Naive thymus-derived CD4-positive, alpha-beta T cell (primary cell): ENCODE measurements at regions of chr21 and their contacts with region 1.

Region 1: DNA sequence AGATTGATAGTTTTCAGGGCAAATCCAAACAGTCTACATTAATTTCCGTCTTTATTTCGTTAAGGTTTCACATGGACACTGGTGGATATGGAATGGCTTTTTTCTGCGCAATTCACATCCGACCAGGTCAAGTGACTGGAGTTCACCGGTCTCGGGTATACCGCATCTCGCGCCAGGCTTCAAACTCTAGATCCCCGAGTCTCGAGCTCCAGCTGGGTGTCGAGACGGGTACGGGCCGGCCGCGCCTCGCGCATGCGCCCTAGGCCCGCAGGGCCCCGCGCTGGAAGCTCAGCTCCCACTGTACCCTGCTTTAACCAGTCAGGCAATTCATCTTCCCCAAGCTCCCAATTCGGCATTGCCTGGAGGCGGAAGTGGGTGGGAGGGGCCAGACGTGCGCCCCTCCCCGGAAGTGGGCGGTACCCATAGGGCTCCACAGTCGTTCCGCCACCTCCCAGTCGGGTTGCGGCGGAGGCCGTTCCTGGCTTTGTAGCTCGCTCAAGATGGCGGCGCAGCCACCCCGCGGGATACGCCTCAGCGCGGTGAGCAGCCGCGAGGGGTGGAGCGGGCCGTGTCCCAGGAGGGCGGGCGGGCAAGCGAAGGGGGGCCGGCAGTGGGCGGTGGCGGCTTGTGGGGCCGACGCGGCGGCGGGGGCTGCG is at the start of gene MORC3:
- DNase-seq: peak; percentile 95 to 98 (median 97)
- ATAC-seq: peak; percentile 96
- H3K4me3 ChIP-seq: peak within 1 kb of the TSS; percentile 78
- H3K4me3 Mint-ChIP-seq: peak within 1 kb of the TSS; percentile 90 to 100 (median 96)
- H3K27ac ChIP-seq: peak within 1 kb of the TSS; percentile 93
- H3K27ac Mint-ChIP-seq: peak within 1 kb of the TSS; percentile 94 to 99 (median 97)
- H3K4me1 ChIP-seq: peaks cover 11 to 22% of the 10 kb centered on the region in 2 donors
- H3K4me1 Mint-ChIP-seq: peaks cover 29 to 40% (median 37%) of the 10 kb centered on the region in 7 donors
- H3K27me3 ChIP-seq: no peaks in the 10 kb centered on the region
- H3K27me3 Mint-ChIP-seq: peaks cover 0 to 5% (median 0%) of the 10 kb centered on the region in 5 donors
- total RNA-seq, gene MORC3: 48.2 to 123 (median 62.0) TPM

Region 2: GRCh38 chr21:36069713-36070573 is 249.9 kb before region 1 on chr21 and contains the start of gene CBR1:
- CTCF ChIA-PET with region 1: no interaction called
- POLR2A ChIA-PET with region 1: interaction called, 6 read pairs
- intact Hi-C with region 1: loop called in 1 of 2 experiments (anchors 2 kb)
- DNase-seq: peak; percentile 62 to 90 (median 84)
- ATAC-seq: peak; percentile 98
- H3K4me3 ChIP-seq: peak within 1 kb of the TSS; percentile 73
- H3K4me3 Mint-ChIP-seq: peak within 1 kb of the TSS; percentile 83 to 93 (median 90)
- H3K27ac ChIP-seq: peak within 1 kb of the TSS; percentile 65
- H3K27ac Mint-ChIP-seq: peak within 1 kb of the TSS; percentile 63 to 93 (median 82)
- H3K4me1 ChIP-seq: peaks cover 5 to 21% of the 10 kb centered on the region in 2 donors
- H3K4me1 Mint-ChIP-seq: peaks cover 12 to 47% (median 41%) of the 10 kb centered on the region in 7 donors
- H3K27me3 ChIP-seq: no peaks in the 10 kb centered on the region
- H3K27me3 Mint-ChIP-seq: no peaks in the 10 kb centered on the region
- total RNA-seq, gene CBR1: 6.0 to 51.1 (median 22.1) TPM

Region 3: DNA sequence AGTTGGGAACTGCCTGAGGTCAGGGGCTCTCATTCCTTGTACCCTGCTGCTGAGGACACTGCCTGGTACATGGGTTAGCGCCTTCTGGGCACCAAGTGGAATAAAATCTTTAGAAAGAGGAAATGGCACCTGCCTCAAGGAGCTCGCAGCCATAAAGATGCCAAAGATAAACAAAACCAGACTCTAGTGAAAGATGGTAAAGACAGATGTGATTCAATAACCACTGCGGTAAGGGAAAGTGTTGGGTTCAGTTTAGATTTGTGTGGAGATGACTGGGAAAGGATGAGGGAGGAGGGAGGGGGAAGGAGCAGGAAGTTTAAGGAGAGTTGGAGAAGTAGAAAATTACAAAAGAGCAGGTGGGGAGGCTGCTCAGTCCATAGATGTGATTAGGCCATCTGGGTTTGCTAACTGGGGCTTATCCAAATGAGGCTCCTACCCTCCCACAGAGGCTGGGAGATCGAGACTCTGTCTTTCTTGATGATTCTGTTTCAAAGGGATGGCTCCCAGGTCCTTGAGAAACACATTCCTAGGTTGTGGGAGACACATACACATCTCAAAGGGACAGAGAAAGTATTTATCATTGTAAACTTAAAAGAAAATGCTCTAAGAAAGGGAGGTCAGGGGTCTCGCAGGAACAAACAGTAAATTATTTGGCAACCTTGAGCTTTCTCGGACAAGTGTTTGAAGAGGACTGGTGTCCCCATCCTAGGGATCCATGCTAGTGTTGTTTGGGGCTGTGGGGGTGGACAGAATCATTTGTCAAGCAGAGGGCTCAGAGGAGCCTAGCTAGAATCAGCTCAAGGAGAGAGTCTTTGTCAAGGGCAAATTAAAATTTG is 65.6 kb before region 1 on chr21:
- CTCF ChIA-PET with region 1: interaction called, 3 read pairs
- POLR2A ChIA-PET with region 1: interaction called, 18 read pairs
- intact Hi-C with region 1: no loop called
- DNase-seq: no peak
- ATAC-seq: no peak
- H3K4me3 ChIP-seq: no peak overlapping the region
- H3K4me3 Mint-ChIP-seq: no peak overlapping the region
- H3K27ac ChIP-seq: no peak overlapping the region
- H3K27ac Mint-ChIP-seq: peak overlapping the region in 5 of 9 donors; percentile 8 to 48 (median 32)
- H3K4me1 ChIP-seq: no peaks in the 10 kb centered on the region
- H3K4me1 Mint-ChIP-seq: peaks cover 7 to 26% (median 23%) of the 10 kb centered on the region in 7 donors
- H3K27me3 ChIP-seq: no peaks in the 10 kb centered on the region
- H3K27me3 Mint-ChIP-seq: no peaks in the 10 kb centered on the region

Region 4: GRCh38 chr21:36288651-36289243 is 31.1 kb before region 1 on chr21:
- CTCF ChIA-PET with region 1: interaction called, 31 read pairs
- POLR2A ChIA-PET with region 1: interaction called, 218 read pairs
- intact Hi-C with region 1: loop called (anchors 1 kb)
- DNase-seq: peak in 6 of 9 donors; percentile 55 to 77 (median 68)
- ATAC-seq: peak; percentile 87
- H3K4me3 ChIP-seq: peak overlapping the region; percentile 40
- H3K4me3 Mint-ChIP-seq: peak overlapping the region; percentile 56 to 90 (median 80)
- H3K27ac ChIP-seq: peak overlapping the region; percentile 96
- H3K27ac Mint-ChIP-seq: peak overlapping the region; percentile 94 to 100 (median 98)
- H3K4me1 ChIP-seq: peaks cover 7 to 9% of the 10 kb centered on the region in 2 donors
- H3K4me1 Mint-ChIP-seq: peaks cover 6 to 30% (median 23%) of the 10 kb centered on the region in 7 donors
- H3K27me3 ChIP-seq: no peaks in the 10 kb centered on the region
- H3K27me3 Mint-ChIP-seq: peaks cover 0 to 3% (median 0%) of the 10 kb centered on the region in 5 donors

Region 5: GRCh38 chr21:36330904-36331303 is 11.0 kb after region 1 on chr21:
- CTCF ChIA-PET with region 1: interaction called, 4 read pairs
- POLR2A ChIA-PET with region 1: interaction called, 16 read pairs
- intact Hi-C with region 1: loop called in 1 of 2 experiments (anchors 1 kb)
- DNase-seq: peak in 7 of 9 donors; percentile 32 to 62 (median 55)
- ATAC-seq: peak; percentile 92
- H3K4me3 ChIP-seq: no peak overlapping the region
- H3K4me3 Mint-ChIP-seq: peak overlapping the region in 7 of 10 donors; percentile 0 to 65 (median 37)
- H3K27ac ChIP-seq: peak overlapping the region; percentile 12
- H3K27ac Mint-ChIP-seq: peak overlapping the region in 8 of 9 donors; percentile 72 to 90 (median 86)
- H3K4me1 ChIP-seq: peaks cover 18 to 23% of the 10 kb centered on the region in 2 donors
- H3K4me1 Mint-ChIP-seq: peaks cover 18 to 74% (median 61%) of the 10 kb centered on the region in 7 donors
- H3K27me3 ChIP-seq: no peaks in the 10 kb centered on the region
- H3K27me3 Mint-ChIP-seq: no peaks in the 10 kb centered on the region